ENCODE measurements at regions of chr22 and their contacts with region 1.

Region 1: DNA sequence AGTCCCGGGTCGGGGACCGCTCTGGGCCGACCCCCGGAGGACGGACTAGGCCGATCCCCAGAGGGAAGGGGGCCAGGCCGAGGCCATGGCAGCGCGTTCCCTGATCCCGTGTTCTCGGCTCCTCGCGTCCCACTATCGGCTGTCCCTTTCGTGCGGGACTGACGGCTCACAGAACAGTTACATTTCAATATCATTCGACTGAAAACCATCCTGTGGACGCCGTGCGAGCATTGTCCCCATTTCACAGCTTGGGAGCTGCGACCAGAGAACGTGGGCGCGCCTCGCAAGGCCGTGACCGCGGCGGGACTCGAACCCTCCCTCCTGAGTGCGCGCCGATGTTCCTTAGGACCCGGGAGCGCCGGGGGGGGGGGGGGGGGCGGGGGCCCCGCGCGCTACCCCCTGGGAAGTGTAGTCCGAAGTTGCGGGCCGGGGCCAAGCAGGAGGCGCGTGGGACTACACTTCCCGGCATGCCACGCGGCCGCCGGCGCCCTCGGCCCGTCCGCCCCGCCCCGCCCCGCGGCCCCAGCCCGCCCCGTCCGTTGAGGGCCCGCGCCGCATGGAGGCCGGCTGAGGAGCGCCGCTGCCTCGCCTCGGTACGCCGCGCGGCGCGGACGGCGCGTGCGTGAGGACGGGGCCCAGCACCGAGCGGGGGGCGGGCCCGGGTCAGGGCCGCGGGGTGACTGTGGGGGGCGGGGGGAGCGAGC is at the start of gene TRABD:
- DNase-seq: peak; percentile 95
- ATAC-seq: peak; percentile 80
- H3K4me3 Mint-ChIP-seq: peak within 1 kb of the TSS; percentile 84
- H3K27ac Mint-ChIP-seq: peak within 1 kb of the TSS; percentile 92
- H3K4me1 Mint-ChIP-seq: peaks cover 27% of the 10 kb centered on the region
- H3K27me3 Mint-ChIP-seq: no peaks in the 10 kb centered on the region
- total RNA-seq, gene TRABD: 60.7 to 74.5 TPM

Region 2: GRCh38 chr22:49852898-49853894 is 332.3 kb before region 1 on chr22 and contains the start of gene ZBED4:
- CTCF ChIA-PET with region 1: no interaction called
- POLR2A ChIA-PET with region 1: no interaction called
- intact Hi-C with region 1: loop called in 1 of 2 experiments (anchors 1 kb)
- DNase-seq: peak; percentile 99
- ATAC-seq: peak; percentile 88
- H3K4me3 Mint-ChIP-seq: peak within 1 kb of the TSS; percentile 96
- H3K27ac Mint-ChIP-seq: peak within 1 kb of the TSS; percentile 87
- H3K4me1 Mint-ChIP-seq: peaks cover 36% of the 10 kb centered on the region
- H3K27me3 Mint-ChIP-seq: peaks cover 8% of the 10 kb centered on the region
- total RNA-seq, gene ZBED4: 17.3 to 17.4 TPM

Region 3: GRCh38 chr22:49936018-49936952 is 249.3 kb before region 1 on chr22:
- CTCF ChIA-PET with region 1: no interaction called
- POLR2A ChIA-PET with region 1: no interaction called
- intact Hi-C with region 1: loop called in 1 of 2 experiments (anchors 10 kb)
- DNase-seq: peak; percentile 99
- ATAC-seq: peak; percentile 84
- H3K4me3 Mint-ChIP-seq: peak overlapping the region; percentile 64
- H3K27ac Mint-ChIP-seq: peak overlapping the region; percentile 85
- H3K4me1 Mint-ChIP-seq: peaks cover 43% of the 10 kb centered on the region
- H3K27me3 Mint-ChIP-seq: no peaks in the 10 kb centered on the region

Region 4: GRCh38 chr22:50148991-50149721 is 36.4 kb before region 1 on chr22:
- CTCF ChIA-PET with region 1: no interaction called
- POLR2A ChIA-PET with region 1: interaction called, 3 read pairs
- intact Hi-C with region 1: loop called in 1 of 2 experiments (anchors 5 kb)
- DNase-seq: peak; percentile 86
- ATAC-seq: peak; percentile 98
- H3K4me3 Mint-ChIP-seq: no peak overlapping the region
- H3K27ac Mint-ChIP-seq: no peak overlapping the region
- H3K4me1 Mint-ChIP-seq: no peaks in the 10 kb centered on the region
- H3K27me3 Mint-ChIP-seq: peaks cover 3% of the 10 kb centered on the region

Region 5: DNA sequence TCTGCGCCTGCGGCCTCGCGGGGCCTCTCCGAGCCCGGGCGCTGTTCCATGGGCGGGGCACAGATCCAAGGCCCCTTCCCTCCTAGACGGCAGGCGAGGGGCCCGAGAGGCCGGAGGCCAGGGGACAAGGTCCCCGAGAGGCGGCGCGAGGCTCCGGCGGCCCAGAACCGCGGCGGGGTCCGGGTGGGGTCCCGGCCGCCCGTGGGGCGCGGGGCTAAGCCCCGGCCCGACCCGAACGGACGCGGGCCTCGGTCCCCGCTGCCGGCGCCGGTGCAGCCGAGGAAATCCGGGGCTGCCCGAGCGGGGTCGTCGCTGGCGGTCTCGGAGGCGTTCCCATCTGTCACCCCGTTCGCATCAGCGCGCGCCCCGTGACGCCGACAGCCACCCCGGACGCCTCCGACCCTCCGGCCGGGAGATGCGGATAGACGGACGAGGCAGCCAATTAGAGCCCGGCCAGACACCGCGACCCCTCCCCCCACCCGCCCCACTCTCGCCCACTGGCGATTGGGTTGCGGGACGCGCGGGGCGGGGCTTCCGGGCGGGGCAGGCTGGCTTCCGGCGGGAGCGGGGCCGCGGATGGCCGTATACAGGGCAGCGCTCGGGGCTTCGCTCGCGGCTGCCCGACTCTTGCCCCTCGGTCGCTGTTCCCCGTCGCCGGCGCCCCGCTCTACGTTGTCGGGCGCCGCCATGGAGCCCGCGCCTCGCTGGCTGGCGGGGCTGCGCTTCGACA is 15.1 kb after region 1 on chr22 and contains the start of gene SELENOO:
- CTCF ChIA-PET with region 1: no interaction called
- POLR2A ChIA-PET with region 1: interaction called, 4 read pairs
- intact Hi-C with region 1: loop called in 1 of 2 experiments (anchors 1 kb)
- DNase-seq: peak; percentile 94
- ATAC-seq: peak; percentile 91
- H3K4me3 Mint-ChIP-seq: peak within 1 kb of the TSS; percentile 79
- H3K27ac Mint-ChIP-seq: no peak within 1 kb of the TSS
- H3K4me1 Mint-ChIP-seq: peaks cover 23% of the 10 kb centered on the region
- H3K27me3 Mint-ChIP-seq: no peaks in the 10 kb centered on the region
- total RNA-seq, gene SELENOO: 14.4 to 18.3 TPM

Region 6: DNA sequence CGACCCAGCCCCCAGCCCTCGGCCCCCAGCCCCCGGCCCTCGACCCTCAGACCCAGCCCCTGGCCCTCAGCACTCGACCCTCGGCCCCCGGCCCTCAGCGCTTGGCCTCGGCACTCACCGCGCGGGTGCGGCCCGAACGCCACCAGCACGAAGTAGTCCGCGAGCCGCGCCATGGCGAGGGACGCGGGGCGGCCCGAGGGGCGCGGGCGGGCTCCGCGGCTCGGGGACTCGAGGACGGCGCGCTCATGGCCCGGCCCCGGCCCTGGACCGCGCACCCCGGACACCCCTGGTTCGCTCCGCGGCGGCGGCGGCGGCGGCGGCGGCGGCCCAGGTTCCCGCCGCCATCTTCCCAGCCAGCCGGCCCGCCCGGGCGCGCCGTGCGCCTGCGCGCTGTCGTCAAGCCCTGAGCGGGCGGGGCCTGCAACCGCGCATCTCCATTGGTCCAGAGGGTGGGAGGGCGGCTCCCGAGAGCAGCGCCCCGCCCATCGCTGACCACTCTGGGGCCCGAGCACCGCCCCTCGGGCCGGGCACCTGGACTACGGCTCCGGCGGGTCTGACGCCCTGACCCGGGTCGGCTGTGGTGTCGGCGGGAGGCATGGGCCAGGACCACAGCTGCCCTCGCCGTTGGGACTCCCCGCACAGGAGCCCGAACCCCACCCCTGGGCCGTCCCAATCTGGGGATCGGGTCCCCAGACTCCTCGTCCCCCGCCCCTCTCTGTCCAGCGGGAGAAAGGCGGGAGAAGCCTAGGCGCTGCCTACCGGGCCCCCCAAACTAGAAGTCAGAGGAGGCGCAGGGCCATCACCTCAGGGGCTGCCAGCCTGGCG is 289.3 kb after region 1 on chr22 and contains the start of gene SBF1:
- CTCF ChIA-PET with region 1: no interaction called
- POLR2A ChIA-PET with region 1: no interaction called
- intact Hi-C with region 1: loop called in 1 of 2 experiments (anchors 5 kb)
- DNase-seq: peak; percentile 95
- ATAC-seq: peak; percentile 78
- H3K4me3 Mint-ChIP-seq: peak within 1 kb of the TSS; percentile 89
- H3K27ac Mint-ChIP-seq: peak within 1 kb of the TSS; percentile 83
- H3K4me1 Mint-ChIP-seq: peaks cover 42% of the 10 kb centered on the region
- H3K27me3 Mint-ChIP-seq: peaks cover 2% of the 10 kb centered on the region
- total RNA-seq, gene SBF1: 97.6 TPM